B cell (primary cell): ENCODE measurements at regions of chr4 and their contacts with region 1.

Region 1: GRCh38 chr4:140373328-140374129 is at the start of gene SCOC:
- DNase-seq: peak; percentile 97
- ATAC-seq: peak; percentile 95
- H3K4me3 ChIP-seq: peak within 1 kb of the TSS; percentile 54 to 98 (median 93)
- H3K4me3 Mint-ChIP-seq: peak within 1 kb of the TSS; percentile 86
- H3K27ac ChIP-seq: peak within 1 kb of the TSS; percentile 74 to 86
- H3K27ac Mint-ChIP-seq: peak within 1 kb of the TSS; percentile 64
- H3K4me1 ChIP-seq: peaks cover 14 to 16% of the 10 kb centered on the region in 2 donors
- H3K4me1 Mint-ChIP-seq: peaks cover 25% of the 10 kb centered on the region
- H3K27me3 ChIP-seq: no peaks in the 10 kb centered on the region
- H3K27me3 Mint-ChIP-seq: no peaks in the 10 kb centered on the region
- CTCF ChIP-seq: no peak
- total RNA-seq, gene SCOC: 18.4 and 19.2 TPM in 2 replicates

Region 2: DNA sequence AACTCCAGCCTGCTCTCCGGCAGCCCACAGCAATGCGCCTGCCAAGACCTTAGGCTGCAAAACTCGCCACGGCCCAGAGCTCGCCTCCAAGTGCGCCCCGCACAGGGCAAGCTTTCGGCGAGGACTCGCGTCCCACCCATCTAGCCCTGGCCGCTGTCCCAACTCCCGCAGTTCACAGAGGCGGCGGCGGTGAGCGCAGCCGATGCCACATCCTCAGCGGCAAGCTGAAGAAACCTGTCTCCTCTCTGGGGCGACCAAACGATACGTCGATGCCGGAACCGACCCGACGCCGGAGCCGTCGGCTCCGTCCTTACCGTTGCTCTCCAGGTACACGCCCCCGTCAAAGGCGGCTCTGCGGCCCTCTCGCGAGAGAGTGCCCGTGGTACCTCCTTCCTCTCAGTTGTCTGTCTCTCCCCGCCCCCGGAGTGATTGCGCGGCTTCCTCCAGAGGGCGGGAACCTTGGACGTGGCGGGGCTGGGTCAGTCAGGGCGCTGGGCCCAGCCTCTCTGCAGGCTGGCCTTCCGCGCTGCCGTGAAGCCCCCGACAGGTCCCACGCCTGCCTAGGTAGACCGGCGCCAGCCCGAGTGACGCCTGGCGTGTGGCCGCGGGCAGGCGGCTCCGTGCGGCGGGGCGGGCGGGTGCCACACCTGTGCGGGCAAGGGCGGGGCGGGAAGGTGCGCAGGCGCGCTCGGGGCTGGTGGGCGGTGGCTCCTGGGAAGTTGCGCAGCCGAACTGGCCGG is 920.0 kb before region 1 on chr4:
- CTCF ChIA-PET with region 1: no interaction called
- POLR2A ChIA-PET with region 1: no interaction called
- intact Hi-C with region 1: loop called (anchors 5 kb)
- DNase-seq: peak; percentile 98
- ATAC-seq: peak; percentile 87
- H3K4me3 ChIP-seq: peak overlapping the region; percentile 64 to 99 (median 93)
- H3K4me3 Mint-ChIP-seq: peak overlapping the region; percentile 96
- H3K27ac ChIP-seq: peak overlapping the region; percentile 97 to 98
- H3K27ac Mint-ChIP-seq: peak overlapping the region; percentile 99
- H3K4me1 ChIP-seq: peaks cover 28 to 34% of the 10 kb centered on the region in 2 donors
- H3K4me1 Mint-ChIP-seq: peaks cover 51% of the 10 kb centered on the region
- H3K27me3 ChIP-seq: no peaks in the 10 kb centered on the region
- H3K27me3 Mint-ChIP-seq: no peaks in the 10 kb centered on the region
- CTCF ChIP-seq: peak; percentile 42

Region 3: GRCh38 chr4:141220655-141221605 is 847.4 kb after region 1 on chr4 and contains the start of gene ZNF330:
- CTCF ChIA-PET with region 1: no interaction called
- POLR2A ChIA-PET with region 1: no interaction called
- intact Hi-C with region 1: loop called (anchors 2 kb)
- DNase-seq: peak; percentile 92
- ATAC-seq: peak; percentile 92
- H3K4me3 ChIP-seq: peak within 1 kb of the TSS; percentile 93 to 99 (median 98)
- H3K4me3 Mint-ChIP-seq: peak within 1 kb of the TSS; percentile 91
- H3K27ac ChIP-seq: peak within 1 kb of the TSS; percentile 84 to 87
- H3K27ac Mint-ChIP-seq: peak within 1 kb of the TSS; percentile 88
- H3K4me1 ChIP-seq: peaks cover 10 to 18% of the 10 kb centered on the region in 2 donors
- H3K4me1 Mint-ChIP-seq: peaks cover 31% of the 10 kb centered on the region
- H3K27me3 ChIP-seq: peaks cover 0 to 4% (median 0%) of the 10 kb centered on the region in 4 experiments
- H3K27me3 Mint-ChIP-seq: peaks cover 6% of the 10 kb centered on the region
- CTCF ChIP-seq: no peak
- total RNA-seq, gene ZNF330: 29.4 and 36.7 TPM in 2 replicates